Activated naive CD4-positive, alpha-beta T cell treated with anti-CD3 and anti-CD28 coated beads for 36 hours (primary cell): ENCODE measurements at regions of chr4 and their contacts with region 1.

Region 1: DNA sequence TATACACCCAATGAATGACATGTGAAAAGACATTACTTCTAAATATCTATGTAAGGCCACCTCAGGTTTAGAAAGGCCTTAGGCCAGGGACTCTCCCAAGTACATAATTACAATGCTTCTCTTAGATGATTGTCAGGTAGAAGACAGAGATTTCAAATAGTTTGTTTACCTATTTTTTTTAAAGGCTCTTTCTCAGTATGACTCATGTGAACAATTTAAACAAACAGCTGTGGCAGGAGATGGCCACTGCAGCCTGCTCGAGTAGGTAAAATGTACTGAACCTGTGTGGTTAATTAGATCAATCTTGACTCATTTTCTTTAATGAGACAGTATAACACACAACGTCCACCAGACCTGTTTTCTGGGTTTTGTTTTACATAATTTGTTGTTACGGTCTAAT is 50.2 kb downstream of the LEF1 start:
- DNase-seq: peak; percentile 58
- H3K4me3 Mint-ChIP-seq: peak overlapping the region; percentile 50
- H3K27ac Mint-ChIP-seq: peak overlapping the region; percentile 96
- H3K4me1 Mint-ChIP-seq: peaks cover 93% of the 10 kb centered on the region
- H3K27me3 Mint-ChIP-seq: no peaks in the 10 kb centered on the region

Region 2: GRCh38 chr4:107801766-107802211 is 316.7 kb before region 1 on chr4:
- CTCF ChIA-PET with region 1: no interaction called
- intact Hi-C with region 1: no loop called
- DNase-seq: no peak
- H3K4me3 Mint-ChIP-seq: no peak overlapping the region
- H3K27ac Mint-ChIP-seq: no peak overlapping the region
- H3K4me1 Mint-ChIP-seq: no peaks in the 10 kb centered on the region
- H3K27me3 Mint-ChIP-seq: peaks cover 34% of the 10 kb centered on the region

Region 3: GRCh38 chr4:108100827-108101226 is 17.7 kb before region 1 on chr4:
- CTCF ChIA-PET with region 1: interaction called, 10 read pairs
- intact Hi-C with region 1: loop called (anchors 1 kb)
- DNase-seq: no peak
- H3K4me3 Mint-ChIP-seq: peak overlapping the region; percentile 7
- H3K27ac Mint-ChIP-seq: peak overlapping the region; percentile 89
- H3K4me1 Mint-ChIP-seq: peaks cover 92% of the 10 kb centered on the region
- H3K27me3 Mint-ChIP-seq: no peaks in the 10 kb centered on the region

Region 4: GRCh38 chr4:108135549-108136209 is 17.2 kb after region 1 on chr4:
- CTCF ChIA-PET with region 1: interaction called, 28 read pairs
- intact Hi-C with region 1: loop called (anchors 1 kb)
- DNase-seq: no peak
- H3K4me3 Mint-ChIP-seq: peak overlapping the region; percentile 65
- H3K27ac Mint-ChIP-seq: peak overlapping the region; percentile 92
- H3K4me1 Mint-ChIP-seq: peaks cover 88% of the 10 kb centered on the region
- H3K27me3 Mint-ChIP-seq: no peaks in the 10 kb centered on the region

Region 5: DNA sequence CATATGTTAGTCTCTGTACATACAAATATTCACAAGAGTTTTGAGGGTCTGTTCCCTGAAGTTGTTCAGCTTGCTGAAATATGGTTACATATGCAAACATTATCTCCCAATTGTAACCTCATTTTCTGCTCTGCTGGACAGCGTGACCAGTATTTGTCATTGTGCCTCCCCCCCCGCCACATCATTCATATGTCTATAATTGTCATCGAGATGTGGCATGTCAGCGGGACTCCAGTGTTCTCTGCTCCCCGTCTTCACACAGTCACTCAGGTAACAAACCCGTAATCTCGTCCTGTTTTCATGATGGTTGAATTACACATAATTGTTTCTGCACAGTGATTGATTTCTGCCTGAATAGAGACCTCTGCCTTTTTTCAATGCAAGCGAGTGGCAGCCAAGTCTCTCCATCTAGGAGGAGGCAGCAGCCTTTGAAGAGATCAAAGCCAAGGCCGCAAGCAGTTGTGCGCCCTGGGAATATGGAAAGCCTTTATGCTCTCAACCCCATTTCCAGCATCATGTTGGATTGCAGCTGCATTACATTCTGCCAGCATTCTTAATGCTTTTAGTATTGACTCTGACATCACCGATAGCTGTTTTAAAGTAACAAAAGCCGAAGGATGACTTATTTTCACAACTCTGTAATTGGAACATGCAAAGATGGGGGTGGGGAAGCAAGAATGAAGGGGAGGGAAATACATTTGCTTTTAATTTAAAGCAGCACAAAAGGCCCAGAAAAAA is 22.9 kb after region 1 on chr4:
- CTCF ChIA-PET with region 1: interaction called, 28 read pairs
- intact Hi-C with region 1: loop called (anchors 1 kb)
- DNase-seq: peak; percentile 72
- H3K4me3 Mint-ChIP-seq: peak overlapping the region; percentile 77
- H3K27ac Mint-ChIP-seq: peak overlapping the region; percentile 99
- H3K4me1 Mint-ChIP-seq: peaks cover 89% of the 10 kb centered on the region
- H3K27me3 Mint-ChIP-seq: no peaks in the 10 kb centered on the region

Region 6: DNA sequence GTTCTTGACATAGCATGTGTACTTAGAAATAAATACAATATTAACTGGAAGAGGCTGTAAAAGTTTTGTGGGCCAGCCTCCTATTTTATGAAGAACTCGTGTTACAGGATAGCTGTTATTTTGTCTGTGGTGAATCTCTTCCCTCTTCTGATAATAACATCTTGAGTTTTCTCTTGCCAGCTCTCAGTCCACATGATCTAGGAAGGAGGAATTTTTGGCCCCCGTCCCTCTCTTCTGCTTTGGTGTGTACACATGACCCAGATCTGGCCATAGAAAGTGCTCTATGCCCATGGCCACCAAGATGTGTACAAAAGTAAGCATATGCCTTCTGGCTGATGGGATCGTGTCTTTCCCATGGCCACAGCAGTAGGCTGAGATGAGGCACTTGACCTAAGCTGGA is 158.2 kb after region 1 on chr4:
- CTCF ChIA-PET with region 1: no interaction called
- intact Hi-C with region 1: no loop called
- DNase-seq: no peak
- H3K4me3 Mint-ChIP-seq: no peak overlapping the region
- H3K27ac Mint-ChIP-seq: no peak overlapping the region
- H3K4me1 Mint-ChIP-seq: peaks cover 8% of the 10 kb centered on the region
- H3K27me3 Mint-ChIP-seq: no peaks in the 10 kb centered on the region